Heart right ventricle (tissue), 16 donors: ENCODE measurements at regions of chr5 and their contacts with region 1.

Region 1: GRCh38 chr5:118611332-118611945 is 376.9 kb downstream of the DTWD2 start:
- DNase-seq: no peak
- ATAC-seq: peak in 2 of 8 donors; percentile 12 to 44
- H3K4me3 ChIP-seq: no peak overlapping the region
- H3K27ac ChIP-seq: no peak overlapping the region
- H3K4me1 ChIP-seq: no peaks in the 10 kb centered on the region
- H3K27me3 ChIP-seq: no peaks in the 10 kb centered on the region
- CTCF ChIP-seq: peak; percentile 32 to 65 (median 56)

Region 2: DNA sequence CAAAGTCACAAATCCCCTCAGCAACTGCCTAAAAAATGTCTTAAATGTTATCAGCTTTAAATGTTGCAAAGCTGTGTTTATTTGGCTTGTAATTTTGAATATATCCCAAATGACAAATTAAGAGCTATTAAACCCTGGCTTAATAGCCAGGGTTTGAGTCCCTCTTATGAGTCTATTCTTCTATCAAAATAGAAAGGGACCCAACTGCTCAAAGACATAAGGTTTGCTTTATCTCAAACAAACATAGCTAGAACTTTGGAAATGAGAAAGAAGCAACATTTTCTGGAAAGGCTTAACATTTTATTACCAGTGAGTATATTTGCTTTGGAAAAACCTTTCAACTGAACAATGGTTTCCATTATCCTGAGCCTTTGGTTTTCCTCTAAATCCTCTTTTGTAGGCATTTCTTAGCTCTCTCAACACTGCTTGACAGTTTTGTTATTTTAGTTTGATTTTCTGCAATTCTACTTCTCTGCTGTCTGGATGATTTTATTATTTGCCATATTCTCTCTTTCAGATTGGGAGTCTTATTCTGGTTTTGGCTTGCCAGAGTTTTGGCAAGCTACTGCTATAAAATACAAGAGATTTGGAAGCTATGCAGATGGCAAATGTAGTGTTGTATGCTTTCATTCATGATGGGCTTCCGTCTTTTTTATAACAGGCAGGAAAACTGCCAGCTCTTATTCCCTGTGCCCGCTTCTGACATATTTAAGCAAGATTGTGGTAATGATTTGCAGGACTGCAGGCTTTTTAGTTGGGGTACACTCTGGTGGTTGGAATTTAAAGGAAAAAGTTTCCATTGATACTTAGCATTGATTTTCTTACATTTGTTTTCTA is 358.0 kb before region 1 on chr5:
- intact Hi-C with region 1: loop called in 1 of 10 experiments (anchors 10 kb)
- DNase-seq: no peak
- ATAC-seq: peak in 3 of 8 donors; percentile 24 to 52 (median 35)
- H3K4me3 ChIP-seq: no peak overlapping the region
- H3K27ac ChIP-seq: no peak overlapping the region
- H3K4me1 ChIP-seq: no peaks in the 10 kb centered on the region
- H3K27me3 ChIP-seq: no peaks in the 10 kb centered on the region
- CTCF ChIP-seq: no peak

Region 3: DNA sequence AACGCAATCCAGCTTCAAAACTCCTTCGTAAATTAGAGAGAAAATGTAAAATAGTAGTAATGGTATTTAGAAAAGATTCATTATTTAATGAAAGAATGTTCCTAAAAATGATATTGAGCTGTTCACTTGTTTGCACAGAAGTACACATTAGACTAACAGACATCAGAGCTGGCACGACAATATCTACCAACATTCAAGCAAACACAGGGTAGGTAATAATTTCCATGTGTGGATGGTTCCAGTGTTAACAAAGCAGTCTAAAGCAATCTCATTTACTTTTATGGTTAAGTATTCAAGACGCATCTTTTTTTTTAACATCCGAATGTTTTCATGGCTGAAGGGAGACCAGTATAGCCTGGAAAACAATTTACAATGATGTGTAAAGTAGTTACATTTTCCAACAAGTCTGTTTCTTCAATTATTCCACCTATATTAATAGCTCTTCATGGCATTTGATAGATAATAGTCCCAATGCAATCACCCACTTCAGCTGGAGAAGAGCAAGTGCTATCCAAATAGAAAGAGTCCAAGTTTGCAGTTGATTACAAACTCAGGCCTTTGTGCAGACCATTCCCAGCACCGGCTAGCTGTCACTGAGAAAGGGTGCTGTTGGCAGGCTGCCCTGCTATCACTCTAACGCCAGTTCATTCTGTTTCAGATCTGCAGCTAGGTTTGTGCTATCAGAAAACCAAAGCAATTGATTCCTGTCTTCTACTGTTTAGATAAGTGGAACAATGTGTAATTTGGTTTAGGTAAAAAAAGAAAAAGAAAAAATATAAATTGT is 81.9 kb before region 1 on chr5:
- intact Hi-C with region 1: loop called in 1 of 10 experiments (anchors 5 kb)
- DNase-seq: peak; percentile 57 to 68
- ATAC-seq: peak in 7 of 8 donors; percentile 47 to 82 (median 74)
- H3K4me3 ChIP-seq: no peak overlapping the region
- H3K27ac ChIP-seq: peak overlapping the region in 5 of 10 donors; percentile 14 to 40 (median 27)
- H3K4me1 ChIP-seq: peaks cover 0 to 30% (median 11%) of the 10 kb centered on the region in 9 donors
- H3K27me3 ChIP-seq: no peaks in the 10 kb centered on the region
- CTCF ChIP-seq: no peak